ENCODE measurements at regions of chr1 and their contacts with region 1.

Region 1: GRCh38 chr1:25232027-25232865 is at the start of gene SYF2:
- DNase-seq: peak; percentile 77 to 98 (median 93)
- ATAC-seq: peak; percentile 87
- H3K4me3 ChIP-seq: peak within 1 kb of the TSS; percentile 60 to 92
- H3K4me3 Mint-ChIP-seq: no peak within 1 kb of the TSS
- H3K27ac ChIP-seq: peak within 1 kb of the TSS; percentile 94 to 97
- H3K27ac Mint-ChIP-seq: no peak within 1 kb of the TSS
- H3K4me1 ChIP-seq: peaks cover 23% of the 10 kb centered on the region
- H3K4me1 Mint-ChIP-seq: peaks cover 38% of the 10 kb centered on the region
- H3K27me3 ChIP-seq: no peaks in the 10 kb centered on the region
- H3K27me3 Mint-ChIP-seq: no peaks in the 10 kb centered on the region
- CTCF ChIP-seq: no peak
- total RNA-seq, gene SYF2: 103 to 118 TPM

Region 2: DNA sequence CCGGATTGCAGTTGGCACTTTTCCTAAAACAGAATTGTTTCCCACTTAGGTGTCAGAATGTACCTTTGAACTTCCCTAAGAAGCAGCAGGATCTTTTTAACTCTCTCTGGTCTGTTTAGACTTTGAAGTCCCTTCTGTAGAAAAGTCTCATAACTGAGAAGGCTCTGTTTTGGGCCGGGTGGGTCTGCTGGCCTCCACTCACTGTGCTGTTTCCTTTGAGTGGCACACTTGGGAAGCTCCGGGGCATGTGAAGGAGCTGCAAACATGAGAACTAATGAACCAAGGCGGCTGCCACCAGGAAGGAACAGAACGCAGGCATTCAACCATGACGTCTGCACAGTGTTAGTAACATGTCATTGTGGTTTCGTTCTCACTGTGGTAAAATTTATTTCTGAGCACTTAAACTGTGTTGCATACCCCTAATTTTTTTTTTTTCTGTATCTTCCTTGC is 695.8 kb before region 1 on chr1:
- CTCF ChIA-PET with region 1: no interaction called
- POLR2A ChIA-PET with region 1: no interaction called
- intact Hi-C with region 1: loop called in 1 of 2 experiments (anchors 5 kb)
- DNase-seq: peak; percentile 54 to 96 (median 69)
- ATAC-seq: peak; percentile 77
- H3K4me3 ChIP-seq: no peak overlapping the region
- H3K4me3 Mint-ChIP-seq: peak overlapping the region; percentile 83
- H3K27ac ChIP-seq: peak overlapping the region; percentile 86
- H3K27ac Mint-ChIP-seq: peak overlapping the region; percentile 99
- H3K4me1 ChIP-seq: peaks cover 60% of the 10 kb centered on the region
- H3K4me1 Mint-ChIP-seq: peaks cover 73% of the 10 kb centered on the region
- H3K27me3 ChIP-seq: no peaks in the 10 kb centered on the region
- H3K27me3 Mint-ChIP-seq: no peaks in the 10 kb centered on the region
- CTCF ChIP-seq: no peak

Region 3: DNA sequence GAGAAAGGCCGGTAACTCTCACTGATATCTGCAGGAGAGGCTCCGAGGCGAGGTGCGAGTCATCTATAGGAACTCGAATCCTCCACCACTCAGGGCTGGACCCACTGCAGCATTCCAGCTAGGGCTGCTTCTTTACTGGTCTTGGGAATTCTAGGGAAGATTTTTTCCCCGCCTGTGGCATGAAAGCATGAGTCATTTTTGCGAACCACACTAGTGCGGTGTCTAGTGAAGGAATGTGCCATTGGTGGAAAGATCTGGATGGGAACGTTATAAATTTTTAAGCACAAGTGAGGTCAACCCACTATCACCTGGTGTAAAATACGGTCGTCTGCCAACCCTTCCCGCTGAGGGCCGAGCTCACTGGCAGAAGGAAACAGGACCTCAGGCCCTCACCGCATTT is 49.6 kb before region 1 on chr1:
- CTCF ChIA-PET with region 1: no interaction called
- POLR2A ChIA-PET with region 1: no interaction called
- intact Hi-C with region 1: no loop called
- DNase-seq: no peak
- ATAC-seq: no peak
- H3K4me3 ChIP-seq: no peak overlapping the region
- H3K4me3 Mint-ChIP-seq: no peak overlapping the region
- H3K27ac ChIP-seq: no peak overlapping the region
- H3K27ac Mint-ChIP-seq: no peak overlapping the region
- H3K4me1 ChIP-seq: no peaks in the 10 kb centered on the region
- H3K4me1 Mint-ChIP-seq: no peaks in the 10 kb centered on the region
- H3K27me3 ChIP-seq: no peaks in the 10 kb centered on the region
- H3K27me3 Mint-ChIP-seq: peaks cover 7% of the 10 kb centered on the region
- CTCF ChIP-seq: no peak

Region 4: DNA sequence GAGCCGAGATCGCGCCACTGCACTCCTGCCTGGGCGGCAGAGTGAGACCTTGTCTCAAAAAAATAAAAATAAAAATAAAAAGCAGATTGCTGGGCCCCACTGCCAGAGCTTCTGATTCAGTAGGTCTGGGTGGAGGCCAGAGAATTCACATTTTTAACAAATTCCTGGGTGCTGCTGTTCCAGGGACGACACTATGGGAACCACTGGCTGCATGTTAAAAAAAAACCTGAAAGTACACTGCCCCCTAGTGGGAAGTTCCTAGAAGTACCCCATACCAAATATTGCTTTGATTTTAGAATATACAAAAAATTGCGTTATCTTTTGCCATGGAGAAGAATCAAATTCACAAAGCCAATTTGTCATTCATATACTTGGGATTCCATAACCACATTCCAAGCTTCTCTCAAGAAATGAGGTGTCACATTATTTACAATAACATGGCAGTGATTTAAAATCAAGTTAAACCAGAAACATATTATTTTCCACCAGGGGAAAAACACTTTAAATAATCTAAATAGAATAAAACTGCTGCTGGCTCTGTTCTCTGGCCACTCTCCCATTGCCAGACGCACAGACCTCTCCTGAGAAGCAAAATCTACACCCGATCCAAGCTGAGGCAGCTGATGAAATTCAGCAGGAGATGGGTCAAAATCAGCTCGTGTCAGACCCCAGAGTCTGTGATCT is 27.3 kb before region 1 on chr1:
- CTCF ChIA-PET with region 1: interaction called, 22 read pairs
- POLR2A ChIA-PET with region 1: interaction called, 3 read pairs
- intact Hi-C with region 1: no loop called
- DNase-seq: peak in 5 of 9 experiments; percentile 13 to 73 (median 50)
- ATAC-seq: peak; percentile 70
- H3K4me3 ChIP-seq: no peak overlapping the region
- H3K4me3 Mint-ChIP-seq: no peak overlapping the region
- H3K27ac ChIP-seq: no peak overlapping the region
- H3K27ac Mint-ChIP-seq: no peak overlapping the region
- H3K4me1 ChIP-seq: no peaks in the 10 kb centered on the region
- H3K4me1 Mint-ChIP-seq: peaks cover 2% of the 10 kb centered on the region
- H3K27me3 ChIP-seq: no peaks in the 10 kb centered on the region
- H3K27me3 Mint-ChIP-seq: peaks cover 10% of the 10 kb centered on the region
- CTCF ChIP-seq: peak; percentile 85

Region 5: DNA sequence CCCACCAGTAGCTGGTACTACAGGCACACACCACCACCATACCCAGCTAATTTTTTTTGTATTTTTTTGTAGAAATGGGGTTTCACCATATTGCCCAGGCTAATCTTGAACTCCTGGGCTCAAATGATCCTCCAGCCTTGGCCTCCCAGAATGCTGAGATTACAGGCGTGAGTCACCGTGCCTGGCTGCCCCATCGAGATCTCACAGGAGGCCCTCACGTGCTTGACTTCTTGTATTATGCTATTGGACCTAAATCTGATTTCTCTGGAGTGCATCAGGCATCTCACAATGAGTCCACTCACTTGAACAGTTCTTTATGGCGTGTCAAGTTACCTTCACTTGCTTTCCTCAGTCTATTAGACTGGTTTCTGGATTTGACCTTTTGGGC is 24.3 kb after region 1 on chr1:
- CTCF ChIA-PET with region 1: no interaction called
- POLR2A ChIA-PET with region 1: interaction called, 14 read pairs
- intact Hi-C with region 1: no loop called
- DNase-seq: peak in 1 of 9 experiments; percentile 0
- ATAC-seq: no peak
- H3K4me3 ChIP-seq: no peak overlapping the region
- H3K4me3 Mint-ChIP-seq: no peak overlapping the region
- H3K27ac ChIP-seq: no peak overlapping the region
- H3K27ac Mint-ChIP-seq: no peak overlapping the region
- H3K4me1 ChIP-seq: no peaks in the 10 kb centered on the region
- H3K4me1 Mint-ChIP-seq: peaks cover 9% of the 10 kb centered on the region
- H3K27me3 ChIP-seq: no peaks in the 10 kb centered on the region
- H3K27me3 Mint-ChIP-seq: no peaks in the 10 kb centered on the region
- CTCF ChIP-seq: no peak

Region 6: DNA sequence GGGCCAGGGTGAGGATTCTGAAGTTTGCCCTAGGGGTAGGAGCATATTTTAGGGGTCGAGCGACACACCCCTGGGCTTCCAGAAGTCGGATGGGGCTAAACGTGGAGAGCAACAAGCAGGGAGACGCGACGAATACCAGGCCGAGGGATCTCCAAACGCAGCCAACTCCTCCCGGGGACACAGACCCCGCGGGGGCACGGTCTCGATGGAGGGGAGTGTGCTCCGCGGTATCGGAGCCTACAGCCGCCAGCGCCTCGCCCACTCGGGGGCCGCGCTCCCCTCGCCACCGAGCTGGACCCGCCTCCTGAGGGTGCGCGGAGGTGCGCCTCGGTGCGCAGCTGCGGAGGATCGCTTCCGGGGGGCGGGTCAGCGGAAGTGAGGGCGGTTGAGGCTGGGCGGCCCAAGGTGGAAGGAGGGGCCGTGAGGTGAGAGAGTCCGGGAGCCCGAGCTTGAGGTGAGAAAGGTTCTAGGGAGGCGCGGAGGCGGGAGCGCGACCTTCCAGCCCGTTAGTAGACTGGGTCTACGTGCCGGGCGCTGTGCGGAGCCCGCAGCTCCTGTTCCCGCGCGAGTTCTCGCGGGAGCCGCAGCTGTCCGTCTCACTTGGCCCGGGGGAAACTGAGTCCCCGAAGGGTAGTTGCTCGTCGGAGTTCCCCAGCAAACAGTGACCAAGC is 587.5 kb after region 1 on chr1 and contains the start of gene MTFR1L:
- CTCF ChIA-PET with region 1: no interaction called
- POLR2A ChIA-PET with region 1: interaction called, 12 read pairs
- intact Hi-C with region 1: loop called in 1 of 2 experiments (anchors 5 kb)
- DNase-seq: peak; percentile 78 to 96 (median 94)
- ATAC-seq: peak; percentile 87
- H3K4me3 ChIP-seq: peak within 1 kb of the TSS; percentile 74 to 95
- H3K4me3 Mint-ChIP-seq: peak within 1 kb of the TSS; percentile 94
- H3K27ac ChIP-seq: peak within 1 kb of the TSS; percentile 65 to 77
- H3K27ac Mint-ChIP-seq: peak within 1 kb of the TSS; percentile 97
- H3K4me1 ChIP-seq: peaks cover 20% of the 10 kb centered on the region
- H3K4me1 Mint-ChIP-seq: peaks cover 35% of the 10 kb centered on the region
- H3K27me3 ChIP-seq: no peaks in the 10 kb centered on the region
- H3K27me3 Mint-ChIP-seq: no peaks in the 10 kb centered on the region
- CTCF ChIP-seq: no peak
- total RNA-seq, gene MTFR1L: 22.9 to 25.7 TPM

Region 7: DNA sequence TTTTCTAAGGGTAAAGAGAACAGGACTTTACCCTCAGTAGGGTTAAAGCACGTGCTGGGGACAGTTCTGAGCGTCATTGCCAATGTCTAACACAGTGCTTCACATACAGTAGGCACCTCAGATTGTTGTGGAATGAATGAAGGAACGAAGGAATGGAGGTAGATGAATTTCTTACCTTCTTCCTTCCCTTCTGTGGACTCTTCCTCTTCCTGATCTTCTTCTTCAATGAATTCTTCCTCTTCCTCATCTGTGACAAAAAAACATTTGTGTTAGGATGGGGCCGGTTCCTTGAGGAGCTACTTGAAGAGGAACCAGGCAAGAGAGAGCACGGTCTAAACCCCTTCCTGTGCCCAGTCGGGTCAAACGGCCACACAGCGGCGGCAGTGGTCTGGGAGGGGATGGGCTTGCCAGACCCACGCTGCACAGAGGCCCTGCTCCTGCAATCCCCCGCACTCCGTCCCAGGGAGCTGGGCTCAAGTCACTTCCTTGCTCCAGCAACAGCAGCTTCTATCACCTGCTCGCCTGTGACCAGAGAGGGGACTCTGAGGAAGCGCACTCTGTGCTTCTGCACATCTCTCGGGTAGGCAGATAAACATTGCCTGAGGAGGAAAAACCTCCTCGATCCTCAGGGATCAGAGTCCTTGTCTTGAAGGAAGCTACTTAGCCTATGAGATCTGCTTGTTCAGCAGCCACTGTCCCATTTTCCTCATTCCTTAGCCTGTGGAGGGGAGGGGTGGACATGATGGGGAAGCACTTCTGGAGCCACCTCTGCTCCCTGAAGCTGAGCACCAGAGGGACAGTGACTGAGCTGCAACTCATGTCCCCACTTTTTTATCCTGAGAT is 821.7 kb after region 1 on chr1:
- CTCF ChIA-PET with region 1: no interaction called
- POLR2A ChIA-PET with region 1: no interaction called
- intact Hi-C with region 1: no loop called
- DNase-seq: no peak
- ATAC-seq: no peak
- H3K4me3 ChIP-seq: no peak overlapping the region
- H3K4me3 Mint-ChIP-seq: no peak overlapping the region
- H3K27ac ChIP-seq: no peak overlapping the region
- H3K27ac Mint-ChIP-seq: no peak overlapping the region
- H3K4me1 ChIP-seq: no peaks in the 10 kb centered on the region
- H3K4me1 Mint-ChIP-seq: peaks cover 3% of the 10 kb centered on the region
- H3K27me3 ChIP-seq: no peaks in the 10 kb centered on the region
- H3K27me3 Mint-ChIP-seq: peaks cover 44% of the 10 kb centered on the region
- CTCF ChIP-seq: no peak